CD4-positive, alpha-beta T cell (primary cell): ENCODE measurements at regions of chr1 and their contacts with region 1.

Region 1: DNA sequence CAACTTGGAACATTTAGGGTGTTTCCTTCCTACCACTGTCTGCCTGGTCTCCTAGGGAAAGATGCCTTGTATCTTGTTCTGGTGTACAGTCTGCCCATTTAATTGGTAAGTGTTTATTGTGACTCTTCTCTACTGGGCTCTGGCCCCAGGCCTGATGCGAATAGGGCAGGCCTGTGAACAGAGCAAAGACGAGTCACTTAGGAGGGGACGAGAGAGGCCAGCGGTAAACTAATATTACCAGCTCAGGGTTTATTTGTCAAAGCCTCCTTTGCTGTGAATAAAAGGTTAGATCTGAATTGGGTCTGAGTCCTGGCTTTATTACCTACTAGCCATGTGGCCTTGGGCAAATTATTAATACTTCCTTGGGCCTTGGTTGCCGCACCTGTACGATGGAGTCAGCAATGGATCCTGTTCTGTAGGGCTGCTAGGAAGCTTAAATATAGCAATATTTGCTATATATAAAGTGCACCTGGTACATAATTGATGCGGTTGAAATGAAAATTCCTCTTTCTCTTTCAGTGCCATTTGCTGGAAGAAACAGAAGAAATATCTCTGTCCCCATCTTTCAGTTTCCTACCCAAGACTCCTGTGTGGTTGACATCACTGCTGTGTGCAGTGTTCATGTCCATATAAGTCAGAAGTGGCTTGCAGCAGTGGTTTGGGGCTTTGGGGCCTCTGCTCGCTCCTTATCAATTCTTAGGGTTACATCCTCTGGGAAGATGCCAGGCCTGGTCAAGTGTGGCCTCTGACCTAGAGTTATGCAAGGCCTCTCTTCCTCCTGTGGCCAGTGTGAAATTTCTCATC is 32.4 kb downstream of the MAPKAPK2 start:
- DNase-seq: peak in 3 of 14 experiments; percentile 49 to 55 (median 53)
- ATAC-seq: peak; percentile 43
- H3K4me3 ChIP-seq: no peak overlapping the region
- H3K4me3 Mint-ChIP-seq: peak overlapping the region; percentile 8
- H3K27ac ChIP-seq: peak overlapping the region; percentile 1 to 61
- H3K27ac Mint-ChIP-seq: peak overlapping the region; percentile 83
- H3K4me1 ChIP-seq: peaks cover 70% of the 10 kb centered on the region
- H3K4me1 Mint-ChIP-seq: peaks cover 81% of the 10 kb centered on the region
- H3K27me3 ChIP-seq: no peaks in the 10 kb centered on the region
- H3K27me3 Mint-ChIP-seq: no peaks in the 10 kb centered on the region
- CTCF ChIP-seq: no peak

Region 2: DNA sequence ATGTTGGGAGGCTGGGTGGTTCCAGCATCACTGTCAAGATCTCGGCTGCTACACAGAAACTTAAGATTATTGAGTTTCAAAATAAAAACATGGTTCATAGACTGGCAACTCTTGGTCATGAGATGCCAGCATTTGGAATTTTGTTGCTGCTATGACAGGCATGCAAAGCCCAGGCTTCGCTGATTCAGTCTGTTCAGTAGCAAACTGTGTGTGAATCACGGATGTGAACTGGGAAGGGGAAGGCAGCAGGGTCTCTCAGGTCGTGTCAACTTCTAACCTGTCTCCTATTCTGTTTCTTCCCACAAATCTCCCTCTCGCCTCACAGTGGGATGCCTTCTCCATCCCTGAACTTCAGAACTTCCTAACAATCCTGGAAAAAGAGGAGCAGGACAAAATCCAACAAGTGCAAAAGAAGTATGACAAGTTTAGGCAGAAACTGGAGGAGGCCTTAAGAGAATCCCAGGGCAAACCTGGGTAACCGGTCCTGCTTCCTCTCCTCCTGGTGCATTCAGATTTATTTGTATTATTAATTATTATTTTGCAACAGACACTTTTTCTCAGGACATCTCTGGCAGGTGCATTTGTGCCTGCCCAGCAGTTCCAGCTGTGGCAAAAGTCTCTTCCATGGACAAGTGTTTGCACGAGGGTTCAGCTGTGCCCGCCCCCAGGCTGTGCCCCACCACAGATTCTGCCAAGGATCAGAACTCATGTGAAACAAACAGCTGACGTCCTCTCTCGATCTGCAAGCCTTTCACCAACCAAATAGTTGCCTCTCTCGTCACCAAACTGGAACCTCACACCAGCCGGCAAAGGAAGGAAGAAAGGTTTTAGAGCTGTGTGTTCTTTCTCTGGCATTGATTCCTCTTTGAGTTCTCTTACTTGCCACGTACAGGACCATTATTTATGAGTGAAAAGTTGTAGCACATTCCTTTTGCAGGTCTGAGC is 130.3 kb before region 1 on chr1:
- CTCF ChIA-PET with region 1: no interaction called
- POLR2A ChIA-PET with region 1: no interaction called
- intact Hi-C with region 1: no loop called
- DNase-seq: no peak
- ATAC-seq: no peak
- H3K4me3 ChIP-seq: no peak overlapping the region
- H3K4me3 Mint-ChIP-seq: no peak overlapping the region
- H3K27ac ChIP-seq: no peak overlapping the region
- H3K27ac Mint-ChIP-seq: peak overlapping the region; percentile 81
- H3K4me1 ChIP-seq: peaks cover 73% of the 10 kb centered on the region
- H3K4me1 Mint-ChIP-seq: peaks cover 62% of the 10 kb centered on the region
- H3K27me3 ChIP-seq: no peaks in the 10 kb centered on the region
- H3K27me3 Mint-ChIP-seq: no peaks in the 10 kb centered on the region
- CTCF ChIP-seq: no peak

Region 3: GRCh38 chr1:206703661-206704060 is 13.4 kb before region 1 on chr1:
- CTCF ChIA-PET with region 1: interaction called, 4 read pairs
- POLR2A ChIA-PET with region 1: interaction called, 9 read pairs
- intact Hi-C with region 1: loop called in 1 of 2 experiments (anchors 2 kb)
- DNase-seq: peak in 11 of 14 experiments; percentile 19 to 92 (median 65)
- ATAC-seq: peak; percentile 90
- H3K4me3 ChIP-seq: no peak overlapping the region
- H3K4me3 Mint-ChIP-seq: peak overlapping the region; percentile 54
- H3K27ac ChIP-seq: peak overlapping the region; percentile 18 to 35
- H3K27ac Mint-ChIP-seq: peak overlapping the region; percentile 88
- H3K4me1 ChIP-seq: peaks cover 89% of the 10 kb centered on the region
- H3K4me1 Mint-ChIP-seq: peaks cover 93% of the 10 kb centered on the region
- H3K27me3 ChIP-seq: no peaks in the 10 kb centered on the region
- H3K27me3 Mint-ChIP-seq: no peaks in the 10 kb centered on the region
- CTCF ChIP-seq: no peak

Region 4: GRCh38 chr1:206744683-206745082 is 27.6 kb after region 1 on chr1:
- CTCF ChIA-PET with region 1: no interaction called
- POLR2A ChIA-PET with region 1: no interaction called
- intact Hi-C with region 1: no loop called
- DNase-seq: peak in 2 of 14 experiments; percentile 35 to 56
- ATAC-seq: no peak
- H3K4me3 ChIP-seq: no peak overlapping the region
- H3K4me3 Mint-ChIP-seq: no peak overlapping the region
- H3K27ac ChIP-seq: no peak overlapping the region
- H3K27ac Mint-ChIP-seq: peak overlapping the region; percentile 5
- H3K4me1 ChIP-seq: peaks cover 22% of the 10 kb centered on the region
- H3K4me1 Mint-ChIP-seq: peaks cover 62% of the 10 kb centered on the region
- H3K27me3 ChIP-seq: no peaks in the 10 kb centered on the region
- H3K27me3 Mint-ChIP-seq: no peaks in the 10 kb centered on the region
- CTCF ChIP-seq: no peak

Region 5: DNA sequence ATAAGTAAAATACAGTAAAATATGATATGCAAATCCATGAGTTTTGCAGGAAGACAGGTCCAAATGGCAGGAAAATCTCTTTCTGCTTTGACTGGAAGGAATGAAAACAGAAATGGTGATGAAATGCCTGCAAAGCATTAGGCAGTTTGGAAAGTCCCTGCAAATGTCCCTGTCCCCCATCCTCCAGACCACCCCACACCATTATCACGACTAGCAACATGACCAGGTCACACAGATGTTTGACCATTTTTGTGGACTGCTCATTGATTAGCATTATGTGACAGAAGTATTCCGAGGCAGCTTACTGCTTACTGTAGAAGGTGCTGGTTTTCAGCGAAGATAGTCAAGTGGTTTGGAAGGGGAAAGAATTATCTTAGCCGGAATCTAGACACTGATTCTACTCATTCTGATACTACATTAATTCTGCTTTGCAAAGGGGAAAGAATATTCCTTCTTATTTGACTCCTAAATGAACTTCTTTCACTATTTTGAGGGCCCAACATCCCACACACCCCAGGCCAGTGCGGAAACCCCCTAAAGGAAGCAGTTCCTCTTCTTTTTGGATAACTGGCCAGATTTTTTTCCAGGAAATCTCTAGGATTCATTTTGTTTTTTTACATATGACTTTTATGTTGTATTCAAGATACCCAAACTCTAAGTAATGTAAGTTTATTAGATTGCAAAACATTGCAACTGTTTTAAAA is 727.6 kb after region 1 on chr1:
- CTCF ChIA-PET with region 1: no interaction called
- POLR2A ChIA-PET with region 1: no interaction called
- intact Hi-C with region 1: loop called in 1 of 2 experiments (anchors 5 kb)
- DNase-seq: no peak
- ATAC-seq: no peak
- H3K4me3 ChIP-seq: no peak overlapping the region
- H3K4me3 Mint-ChIP-seq: no peak overlapping the region
- H3K27ac ChIP-seq: no peak overlapping the region
- H3K27ac Mint-ChIP-seq: no peak overlapping the region
- H3K4me1 ChIP-seq: no peaks in the 10 kb centered on the region
- H3K4me1 Mint-ChIP-seq: no peaks in the 10 kb centered on the region
- H3K27me3 ChIP-seq: no peaks in the 10 kb centered on the region
- H3K27me3 Mint-ChIP-seq: peaks cover 1% of the 10 kb centered on the region
- CTCF ChIP-seq: no peak